SK-N-SH (cell line): ENCODE measurements at regions of chrX and their contacts with region 1.

Region 1: DNA sequence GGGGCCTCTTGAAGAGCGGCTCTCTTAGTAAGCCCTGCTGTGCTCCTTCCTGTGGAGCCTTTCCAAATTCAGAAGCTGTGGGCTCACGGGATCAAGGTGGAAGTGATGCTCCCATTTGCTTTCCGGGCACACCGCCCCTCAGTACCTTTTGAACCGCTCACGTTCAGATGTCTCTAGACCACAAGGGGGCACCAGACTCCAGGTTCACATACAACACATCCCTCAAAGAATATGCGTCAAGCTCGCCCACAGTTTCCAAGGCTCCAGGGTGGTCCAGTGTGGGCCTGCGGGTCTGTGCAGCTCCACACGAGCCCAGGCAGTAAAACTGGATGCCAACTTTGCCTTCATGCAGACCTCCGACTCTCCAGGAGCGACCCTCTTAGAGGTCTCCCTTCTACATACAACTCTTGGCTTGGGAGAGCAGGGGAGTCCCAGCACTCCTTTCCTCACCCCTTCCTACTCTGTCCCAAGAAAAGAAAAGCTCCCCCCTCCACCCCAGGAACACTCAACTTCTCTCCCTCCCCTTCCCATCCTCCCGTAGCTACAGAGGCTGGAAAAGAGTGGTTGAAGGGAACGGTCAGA is 11.0 kb downstream of the SUPT20HL1 start:
- DNase-seq: peak; percentile 69
- H3K4me3 ChIP-seq: no peak overlapping the region
- H3K27ac ChIP-seq: no peak overlapping the region
- H3K4me1 ChIP-seq: no peaks in the 10 kb centered on the region; a peak in 1 of 4 replicates
- H3K27me3 ChIP-seq: no peaks in the 10 kb centered on the region; the same call in 1 of the 2 replicates
- CTCF ChIP-seq: peak; percentile 66
- EP300 ChIP-seq: no peak
- RAD21 ChIP-seq: peak; percentile 57

Region 2: DNA sequence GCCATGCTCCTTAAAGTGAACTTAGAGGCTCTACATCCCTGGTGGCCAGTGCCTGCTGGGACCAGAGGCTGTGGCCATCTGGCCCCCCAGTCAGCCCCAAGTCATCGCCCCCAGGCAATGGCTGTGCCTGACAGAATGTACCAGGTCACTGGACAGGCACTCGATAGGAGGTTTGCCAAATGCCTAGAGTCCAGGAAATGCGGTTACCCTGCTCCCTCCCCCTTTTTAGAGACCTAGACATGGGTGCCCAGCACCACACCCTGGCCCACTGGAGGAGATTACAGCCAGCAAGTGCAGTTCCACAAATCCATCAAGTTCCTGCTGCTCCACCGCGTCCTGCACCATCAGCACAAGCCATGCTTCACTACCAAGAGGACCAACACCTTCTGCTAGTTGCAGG is 238.2 kb before region 1 on chrX:
- CTCF ChIA-PET with region 1: no interaction called
- POLR2A ChIA-PET with region 1: no interaction called
- DNase-seq: no peak
- H3K4me3 ChIP-seq: no peak overlapping the region
- H3K27ac ChIP-seq: no peak overlapping the region
- H3K4me1 ChIP-seq: no peaks in the 10 kb centered on the region
- H3K27me3 ChIP-seq: no peaks in the 10 kb centered on the region; the same call in 1 of the 2 replicates
- CTCF ChIP-seq: no peak
- EP300 ChIP-seq: no peak
- RAD21 ChIP-seq: no peak

Region 3: GRCh38 chrX:24153134-24153795 is 218.2 kb before region 1 on chrX:
- CTCF ChIA-PET with region 1: no interaction called
- POLR2A ChIA-PET with region 1: no interaction called
- DNase-seq: no peak
- H3K4me3 ChIP-seq: peak overlapping the region in 1 of 2 experiments; percentile 26; a peak in 1 of 4 replicates
- H3K27ac ChIP-seq: peak overlapping the region; percentile 53 to 97
- H3K4me1 ChIP-seq: peaks cover 29 to 44% of the 10 kb centered on the region in 2 experiments; a peak in 3 of 4 replicates
- H3K27me3 ChIP-seq: no peaks in the 10 kb centered on the region
- CTCF ChIP-seq: no peak
- EP300 ChIP-seq: no peak
- RAD21 ChIP-seq: no peak

Region 4: GRCh38 chrX:24259544-24260240 is 111.8 kb before region 1 on chrX:
- CTCF ChIA-PET with region 1: interaction called, 13 read pairs
- POLR2A ChIA-PET with region 1: no interaction called
- DNase-seq: peak; percentile 49
- H3K4me3 ChIP-seq: no peak overlapping the region; a peak in 1 of 4 replicates
- H3K27ac ChIP-seq: no peak overlapping the region
- H3K4me1 ChIP-seq: no peaks in the 10 kb centered on the region
- H3K27me3 ChIP-seq: peaks cover 8% of the 10 kb centered on the region
- CTCF ChIP-seq: peak; percentile 84
- EP300 ChIP-seq: no peak
- RAD21 ChIP-seq: peak; percentile 82

Region 5: DNA sequence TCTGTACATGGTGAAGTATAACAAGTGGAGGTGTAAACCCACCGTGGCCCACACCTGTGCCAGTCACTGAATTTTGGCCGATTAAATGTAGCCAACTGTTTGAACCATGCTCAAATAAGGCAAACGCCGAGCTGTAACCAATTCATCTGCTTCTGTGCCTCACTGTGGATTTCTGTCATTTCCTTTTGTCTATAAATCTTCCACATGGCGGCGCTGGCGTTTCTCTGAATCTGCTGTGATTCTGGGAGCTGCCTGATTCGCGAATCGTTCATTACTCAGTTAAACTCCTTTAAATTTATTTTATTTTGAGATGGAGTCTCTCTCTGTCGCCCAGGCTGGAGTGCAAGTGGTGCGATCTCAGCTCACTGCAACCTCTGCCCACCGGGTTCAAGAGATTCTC is 76.9 kb before region 1 on chrX:
- CTCF ChIA-PET with region 1: interaction called, 12 read pairs
- POLR2A ChIA-PET with region 1: no interaction called
- DNase-seq: peak; percentile 31
- H3K4me3 ChIP-seq: no peak overlapping the region
- H3K27ac ChIP-seq: no peak overlapping the region
- H3K4me1 ChIP-seq: no peaks in the 10 kb centered on the region; a peak in 1 of 4 replicates
- H3K27me3 ChIP-seq: no peaks in the 10 kb centered on the region; the same call in 1 of the 2 replicates
- CTCF ChIP-seq: peak; percentile 56
- EP300 ChIP-seq: no peak
- RAD21 ChIP-seq: peak; percentile 63

Region 6: DNA sequence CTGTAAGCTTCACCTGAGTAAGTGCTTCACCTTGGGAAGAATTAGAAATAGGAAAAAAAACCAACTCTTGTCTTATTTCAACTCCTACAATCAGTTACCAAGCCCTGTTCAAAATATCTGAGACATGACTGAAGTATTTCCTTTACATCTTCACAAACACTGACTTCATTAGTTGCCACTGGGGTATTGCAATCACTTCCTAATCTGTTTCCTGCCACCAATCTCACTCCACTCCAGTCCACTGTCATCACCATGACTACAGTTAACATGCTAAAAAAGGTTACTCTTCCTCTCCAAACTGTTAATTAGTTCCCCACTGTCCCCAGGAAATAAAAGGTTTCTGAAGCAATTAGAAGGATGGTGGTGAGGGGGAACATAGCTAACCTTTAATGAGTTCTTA is 14.4 kb before region 1 on chrX:
- CTCF ChIA-PET with region 1: interaction called, 18 read pairs
- POLR2A ChIA-PET with region 1: no interaction called
- DNase-seq: no peak
- H3K4me3 ChIP-seq: no peak overlapping the region
- H3K27ac ChIP-seq: no peak overlapping the region
- H3K4me1 ChIP-seq: no peaks in the 10 kb centered on the region
- H3K27me3 ChIP-seq: no peaks in the 10 kb centered on the region; the same call in 1 of the 2 replicates
- CTCF ChIP-seq: no peak
- EP300 ChIP-seq: no peak
- RAD21 ChIP-seq: no peak

Region 7: DNA sequence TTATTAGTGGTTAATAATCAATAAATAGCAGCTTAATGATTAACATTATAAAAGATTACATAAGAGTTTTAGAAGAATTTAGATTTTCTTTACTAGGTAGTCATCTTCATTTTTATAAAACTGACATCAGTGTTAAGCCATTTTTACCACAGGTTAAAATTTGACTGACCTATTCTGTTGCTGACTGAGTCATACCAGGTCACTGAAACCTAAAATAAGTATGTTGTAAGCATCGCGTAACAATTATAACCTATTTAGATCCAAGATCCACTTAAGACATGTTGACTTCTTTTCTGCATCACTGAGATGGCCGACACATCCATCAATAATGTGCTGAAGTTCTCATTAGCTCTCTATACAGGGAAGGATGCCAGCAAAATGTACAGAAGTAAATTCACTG is 607.6 kb after region 1 on chrX:
- CTCF ChIA-PET with region 1: no interaction called
- POLR2A ChIA-PET with region 1: no interaction called
- DNase-seq: no peak
- H3K4me3 ChIP-seq: no peak overlapping the region
- H3K27ac ChIP-seq: no peak overlapping the region
- H3K4me1 ChIP-seq: no peaks in the 10 kb centered on the region; a peak in 1 of 4 replicates
- H3K27me3 ChIP-seq: no peaks in the 10 kb centered on the region
- CTCF ChIP-seq: no peak
- EP300 ChIP-seq: no peak
- RAD21 ChIP-seq: no peak